Natural killer cell (primary cell): ENCODE measurements at regions of chr17 and their contacts with region 1.

Region 1: DNA sequence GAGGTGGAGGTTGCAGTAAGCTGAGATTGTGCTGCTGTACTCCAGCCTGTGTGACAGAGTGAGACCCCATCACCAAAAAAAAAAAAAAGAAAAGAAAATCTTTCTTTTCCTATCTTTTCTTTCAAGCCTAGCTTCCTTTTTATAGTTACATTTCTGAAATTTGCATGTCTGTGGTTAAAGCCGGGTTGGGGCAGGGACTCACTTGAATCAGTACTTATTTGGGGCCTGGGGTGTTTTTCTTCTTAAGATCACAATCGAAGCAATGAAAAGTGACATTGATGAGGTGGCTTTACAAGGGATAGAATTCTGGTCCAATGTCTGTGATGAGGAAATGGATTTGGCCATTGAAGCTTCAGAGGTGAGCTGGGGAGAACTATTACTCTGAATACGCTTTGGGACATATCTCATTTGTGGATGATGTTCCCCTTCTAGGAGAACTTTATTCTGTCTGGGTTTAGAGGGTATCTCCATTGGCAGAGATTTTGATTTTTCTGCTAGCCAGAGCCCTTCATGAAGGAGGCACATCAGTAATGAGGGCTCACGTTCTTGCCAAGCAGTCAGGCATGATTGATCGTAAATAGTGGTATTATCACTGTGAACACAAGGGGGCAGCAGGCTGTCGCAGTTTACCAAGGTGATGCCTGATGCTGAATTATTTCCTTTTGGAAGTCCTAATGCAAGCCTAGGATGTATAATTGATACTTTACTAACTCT is 14.3 kb downstream of the KPNB1 start:
- DNase-seq: peak; percentile 49 to 86
- ATAC-seq: peak; percentile 62 to 73 (median 65)
- H3K4me3 ChIP-seq: no peak overlapping the region
- H3K4me3 Mint-ChIP-seq: peak overlapping the region; percentile 4
- H3K27ac ChIP-seq: peak overlapping the region; percentile 31
- H3K27ac Mint-ChIP-seq: peak overlapping the region; percentile 64 to 80
- H3K4me1 ChIP-seq: peaks cover 12% of the 10 kb centered on the region
- H3K4me1 Mint-ChIP-seq: peaks cover 17 to 22% of the 10 kb centered on the region in 2 donors
- H3K27me3 ChIP-seq: no peaks in the 10 kb centered on the region
- H3K27me3 Mint-ChIP-seq: no peaks in the 10 kb centered on the region
- CTCF ChIP-seq: peak; percentile 90

Region 2: DNA sequence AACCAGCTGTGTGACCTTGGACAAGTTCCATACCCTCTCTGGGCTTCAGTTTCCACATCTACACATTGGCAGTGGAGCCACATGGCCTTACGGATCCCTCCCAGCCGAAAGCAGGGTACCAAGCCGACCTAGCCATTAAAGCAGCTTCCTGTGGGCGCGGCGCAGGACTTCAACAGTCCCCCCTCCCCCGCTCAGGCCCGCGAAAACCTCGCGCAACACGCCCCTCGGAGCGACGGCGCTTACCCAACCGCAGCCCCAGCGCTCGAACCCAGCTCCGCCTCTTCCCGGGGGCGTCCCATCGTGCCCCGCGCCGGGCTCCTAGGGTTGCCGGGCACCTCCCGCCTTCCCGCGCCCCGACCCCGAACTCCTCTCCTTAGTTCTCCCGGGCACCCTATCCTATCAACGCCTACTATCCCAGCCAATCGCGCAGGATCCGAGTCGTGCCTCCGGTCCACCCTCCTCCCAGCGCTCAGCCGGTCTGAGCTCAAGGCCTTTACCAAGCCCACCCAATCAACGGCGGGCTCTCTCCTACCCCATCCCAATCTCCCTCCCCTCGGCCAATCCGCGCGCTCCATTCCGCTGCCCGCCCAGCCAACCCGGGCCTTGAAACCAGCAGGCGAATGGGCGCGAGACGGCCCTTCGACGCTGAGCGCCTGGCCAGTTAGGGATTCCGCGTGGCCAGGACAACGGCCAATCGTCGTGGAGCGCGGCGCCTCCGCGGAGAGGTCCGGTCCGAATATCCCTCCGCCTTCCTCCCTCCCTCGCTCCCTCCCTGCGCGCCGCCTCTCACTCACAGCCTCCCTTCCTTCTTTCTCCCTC is 14.7 kb before region 1 on chr17 and contains the start of gene KPNB1:
- intact Hi-C with region 1: loop called (anchors 1 kb)
- DNase-seq: peak; percentile 96 to 99
- ATAC-seq: peak; percentile 81 to 94 (median 84)
- H3K4me3 ChIP-seq: peak within 1 kb of the TSS; percentile 84
- H3K4me3 Mint-ChIP-seq: peak within 1 kb of the TSS; percentile 96
- H3K27ac ChIP-seq: peak within 1 kb of the TSS; percentile 81
- H3K27ac Mint-ChIP-seq: peak within 1 kb of the TSS; percentile 93 to 97
- H3K4me1 ChIP-seq: peaks cover 17% of the 10 kb centered on the region
- H3K4me1 Mint-ChIP-seq: peaks cover 36 to 48% of the 10 kb centered on the region in 2 donors
- H3K27me3 ChIP-seq: no peaks in the 10 kb centered on the region
- H3K27me3 Mint-ChIP-seq: no peaks in the 10 kb centered on the region
- CTCF ChIP-seq: no peak
- total RNA-seq, gene KPNB1: 236 to 273 (median 259) TPM

Region 3: GRCh38 chr17:47742319-47743181 is 78.5 kb after region 1 on chr17:
- intact Hi-C with region 1: loop called (anchors 2 kb)
- DNase-seq: peak in 1 of 2 donors; percentile 73
- ATAC-seq: peak; percentile 5 to 30 (median 29)
- H3K4me3 ChIP-seq: peak overlapping the region; percentile 22
- H3K4me3 Mint-ChIP-seq: peak overlapping the region; percentile 99
- H3K27ac ChIP-seq: peak overlapping the region; percentile 75
- H3K27ac Mint-ChIP-seq: peak overlapping the region; percentile 85 to 94
- H3K4me1 ChIP-seq: peaks cover 88% of the 10 kb centered on the region
- H3K4me1 Mint-ChIP-seq: peaks cover 69 to 79% of the 10 kb centered on the region in 2 donors
- H3K27me3 ChIP-seq: no peaks in the 10 kb centered on the region
- H3K27me3 Mint-ChIP-seq: no peaks in the 10 kb centered on the region
- CTCF ChIP-seq: peak; percentile 48

Region 4: GRCh38 chr17:47789611-47790561 is 125.8 kb after region 1 on chr17:
- intact Hi-C with region 1: loop called (anchors 1 kb)
- DNase-seq: peak; percentile 52 to 74
- ATAC-seq: peak; percentile 88 to 99 (median 98)
- H3K4me3 ChIP-seq: peak overlapping the region; percentile 29
- H3K4me3 Mint-ChIP-seq: peak overlapping the region; percentile 84
- H3K27ac ChIP-seq: no peak overlapping the region
- H3K27ac Mint-ChIP-seq: no peak overlapping the region
- H3K4me1 ChIP-seq: peaks cover 8% of the 10 kb centered on the region
- H3K4me1 Mint-ChIP-seq: peaks cover 11 to 17% of the 10 kb centered on the region in 2 donors
- H3K27me3 ChIP-seq: peaks cover 27% of the 10 kb centered on the region
- H3K27me3 Mint-ChIP-seq: peaks cover 37 to 42% of the 10 kb centered on the region in 2 donors
- CTCF ChIP-seq: peak; percentile 72

Region 5: GRCh38 chr17:47802341-47803022 is 138.4 kb after region 1 on chr17:
- intact Hi-C with region 1: loop called (anchors 1 kb)
- DNase-seq: peak in 1 of 2 donors; percentile 76
- ATAC-seq: peak; percentile 66 to 91 (median 84)
- H3K4me3 ChIP-seq: no peak overlapping the region
- H3K4me3 Mint-ChIP-seq: no peak overlapping the region
- H3K27ac ChIP-seq: no peak overlapping the region
- H3K27ac Mint-ChIP-seq: peak overlapping the region in 1 of 2 donors; percentile 67
- H3K4me1 ChIP-seq: no peaks in the 10 kb centered on the region
- H3K4me1 Mint-ChIP-seq: no peaks in the 10 kb centered on the region
- H3K27me3 ChIP-seq: no peaks in the 10 kb centered on the region
- H3K27me3 Mint-ChIP-seq: no peaks in the 10 kb centered on the region
- CTCF ChIP-seq: peak; percentile 72

Region 6: GRCh38 chr17:47889734-47890529 is 225.9 kb after region 1 on chr17:
- intact Hi-C with region 1: loop called (anchors 1 kb)
- DNase-seq: peak; percentile 89 to 93
- ATAC-seq: peak; percentile 91 to 100 (median 98)
- H3K4me3 ChIP-seq: no peak overlapping the region
- H3K4me3 Mint-ChIP-seq: no peak overlapping the region
- H3K27ac ChIP-seq: no peak overlapping the region
- H3K27ac Mint-ChIP-seq: peak overlapping the region in 1 of 2 donors; percentile 52
- H3K4me1 ChIP-seq: peaks cover under 1% of the 10 kb centered on the region
- H3K4me1 Mint-ChIP-seq: peaks cover 13 to 14% of the 10 kb centered on the region in 2 donors
- H3K27me3 ChIP-seq: no peaks in the 10 kb centered on the region
- H3K27me3 Mint-ChIP-seq: no peaks in the 10 kb centered on the region
- CTCF ChIP-seq: peak; percentile 93